Heart right ventricle (tissue), 16 donors: ENCODE measurements at regions of chr1 and their contacts with region 1.

Region 1: DNA sequence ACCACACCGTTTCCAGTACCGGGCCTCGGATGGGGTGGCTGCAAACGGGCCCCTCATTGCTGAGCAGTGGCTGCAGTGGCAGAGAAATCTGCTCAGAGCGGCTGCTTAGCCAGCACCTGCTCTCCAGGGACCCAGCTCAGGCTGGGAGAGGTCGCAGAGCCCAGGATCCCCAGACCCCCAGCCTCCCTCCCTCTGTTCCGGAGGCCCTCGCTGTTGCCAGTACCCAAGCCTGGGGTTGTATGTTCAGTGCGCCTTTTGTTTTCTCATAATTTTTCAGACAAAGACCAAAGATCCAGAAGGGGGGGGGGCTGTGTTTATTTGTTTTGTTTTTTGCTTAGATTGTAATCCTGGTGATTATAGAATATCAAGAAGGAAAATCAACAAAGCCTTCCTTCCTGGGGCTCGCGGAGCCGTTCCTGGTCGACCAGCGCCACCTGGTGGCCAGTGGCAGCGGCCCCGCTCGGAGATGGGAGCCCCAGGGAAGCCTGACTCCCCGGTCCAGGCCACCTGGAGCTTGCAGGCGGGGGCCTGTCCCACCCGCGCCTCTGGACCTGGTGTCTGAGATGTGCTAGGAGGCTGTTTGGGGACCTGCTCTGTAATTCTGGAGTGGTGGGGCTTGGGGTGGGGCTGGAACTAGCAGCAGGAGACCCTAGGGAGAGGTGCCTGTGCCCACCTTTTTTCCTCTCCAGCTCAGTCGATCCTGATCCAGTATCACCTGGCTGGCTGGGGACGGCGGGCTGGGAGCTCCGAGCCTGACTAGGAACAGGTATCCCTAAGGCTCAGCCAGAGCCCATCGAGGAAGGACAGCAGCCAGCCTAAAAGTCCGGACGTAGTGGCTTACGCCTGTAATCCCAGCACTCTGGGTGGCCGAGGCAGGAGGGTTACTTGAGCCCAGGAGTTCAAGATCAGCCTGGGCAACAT is 123.9 kb upstream of the VAMP3 start:
- DNase-seq: peak; percentile 60 to 79
- ATAC-seq: peak in 5 of 8 donors; percentile 32 to 56 (median 41)
- H3K4me3 ChIP-seq: no peak overlapping the region
- H3K27ac ChIP-seq: no peak overlapping the region
- H3K4me1 ChIP-seq: peaks cover 2 to 30% (median 19%) of the 10 kb centered on the region in 9 donors
- H3K27me3 ChIP-seq: peaks cover 0 to 8% (median 0%) of the 10 kb centered on the region in 7 donors
- CTCF ChIP-seq: peak; percentile 89 to 99 (median 93)

Region 2: GRCh38 chr1:7042322-7043190 is 604.7 kb before region 1 on chr1:
- intact Hi-C with region 1: loop called in 9 of 10 experiments (anchors 2 to 10 kb)
- DNase-seq: no peak
- ATAC-seq: peak in 1 of 8 donors; percentile 26
- H3K4me3 ChIP-seq: no peak overlapping the region
- H3K27ac ChIP-seq: no peak overlapping the region
- H3K4me1 ChIP-seq: no peaks in the 10 kb centered on the region
- H3K27me3 ChIP-seq: peaks cover 0 to 28% (median 9%) of the 10 kb centered on the region in 7 donors
- CTCF ChIP-seq: peak in 8 of 9 donors; percentile 10 to 64 (median 54)

Region 3: DNA sequence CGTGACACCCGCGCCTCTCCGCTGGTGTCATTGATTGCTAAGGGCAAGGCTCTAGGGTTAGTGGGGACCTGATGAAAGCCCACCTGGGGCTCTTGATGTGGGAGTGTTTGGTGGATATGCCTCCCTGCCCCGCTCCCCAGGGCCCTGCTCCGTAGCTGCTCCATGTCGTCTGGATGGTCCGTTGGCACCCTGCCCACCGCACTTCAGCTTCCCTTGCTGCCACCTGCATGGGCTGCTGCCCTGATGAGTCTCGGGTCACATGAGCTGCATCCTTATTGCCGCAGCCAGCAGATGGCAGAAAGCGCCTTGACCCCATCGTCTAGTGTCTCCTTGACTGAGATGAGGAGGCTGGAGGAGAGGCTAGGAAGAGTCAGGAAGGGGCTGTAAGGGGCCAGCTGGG is 422.6 kb before region 1 on chr1:
- intact Hi-C with region 1: loop called in 6 of 10 experiments (anchors 5 to 10 kb)
- DNase-seq: peak; percentile 15 to 26
- ATAC-seq: peak in 4 of 8 donors; percentile 21 to 51 (median 38)
- H3K4me3 ChIP-seq: no peak overlapping the region
- H3K27ac ChIP-seq: no peak overlapping the region
- H3K4me1 ChIP-seq: no peaks in the 10 kb centered on the region
- H3K27me3 ChIP-seq: peaks cover 0 to 10% (median 0%) of the 10 kb centered on the region in 7 donors
- CTCF ChIP-seq: peak in 4 of 9 donors; percentile 6 to 41 (median 30)

Region 4: DNA sequence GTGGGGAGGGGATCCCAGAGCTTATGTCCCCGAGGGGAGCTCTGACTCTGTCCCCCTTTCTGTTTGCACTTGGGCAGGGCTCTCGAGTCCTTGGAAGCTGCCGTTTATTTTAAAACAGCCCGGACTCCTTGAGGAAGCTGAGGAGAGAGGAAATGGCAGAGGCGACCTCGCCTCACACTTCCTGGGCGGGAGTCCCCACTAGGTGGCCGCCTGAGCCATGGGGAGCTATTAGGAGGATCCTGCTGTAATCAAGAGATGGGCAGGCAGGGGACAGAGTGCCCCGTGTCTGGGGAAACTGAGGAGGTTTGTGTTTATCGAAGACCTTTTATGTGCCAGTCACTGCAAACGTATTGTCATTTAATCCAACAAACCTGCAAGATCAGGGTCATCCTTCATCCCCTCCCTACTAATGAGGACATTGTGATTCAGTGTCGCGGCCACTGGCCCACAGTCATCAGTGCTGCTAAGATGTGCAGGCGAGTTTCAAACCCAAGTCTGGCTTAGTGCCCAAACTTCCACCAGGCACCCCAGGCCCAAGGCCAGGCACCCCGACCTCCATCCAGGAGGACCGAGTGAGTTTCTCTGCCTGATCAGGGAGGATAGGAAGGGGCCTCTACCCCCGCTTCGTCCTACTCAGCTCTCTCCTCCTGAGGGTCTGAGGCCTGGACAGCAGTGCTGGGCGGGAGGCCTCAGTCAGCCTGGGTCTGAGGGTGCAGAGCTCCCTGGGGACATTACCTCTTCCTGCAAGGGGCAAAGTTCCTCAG is 193.0 kb before region 1 on chr1:
- intact Hi-C with region 1: loop called in 8 of 10 experiments (anchors 1 to 10 kb)
- DNase-seq: peak; percentile 17 to 38
- ATAC-seq: peak in 4 of 8 donors; percentile 27 to 59 (median 40)
- H3K4me3 ChIP-seq: no peak overlapping the region
- H3K27ac ChIP-seq: no peak overlapping the region
- H3K4me1 ChIP-seq: peaks cover 0 to 11% (median 0%) of the 10 kb centered on the region in 9 donors
- H3K27me3 ChIP-seq: no peaks in the 10 kb centered on the region
- CTCF ChIP-seq: peak; percentile 22 to 63 (median 49)

Region 5: DNA sequence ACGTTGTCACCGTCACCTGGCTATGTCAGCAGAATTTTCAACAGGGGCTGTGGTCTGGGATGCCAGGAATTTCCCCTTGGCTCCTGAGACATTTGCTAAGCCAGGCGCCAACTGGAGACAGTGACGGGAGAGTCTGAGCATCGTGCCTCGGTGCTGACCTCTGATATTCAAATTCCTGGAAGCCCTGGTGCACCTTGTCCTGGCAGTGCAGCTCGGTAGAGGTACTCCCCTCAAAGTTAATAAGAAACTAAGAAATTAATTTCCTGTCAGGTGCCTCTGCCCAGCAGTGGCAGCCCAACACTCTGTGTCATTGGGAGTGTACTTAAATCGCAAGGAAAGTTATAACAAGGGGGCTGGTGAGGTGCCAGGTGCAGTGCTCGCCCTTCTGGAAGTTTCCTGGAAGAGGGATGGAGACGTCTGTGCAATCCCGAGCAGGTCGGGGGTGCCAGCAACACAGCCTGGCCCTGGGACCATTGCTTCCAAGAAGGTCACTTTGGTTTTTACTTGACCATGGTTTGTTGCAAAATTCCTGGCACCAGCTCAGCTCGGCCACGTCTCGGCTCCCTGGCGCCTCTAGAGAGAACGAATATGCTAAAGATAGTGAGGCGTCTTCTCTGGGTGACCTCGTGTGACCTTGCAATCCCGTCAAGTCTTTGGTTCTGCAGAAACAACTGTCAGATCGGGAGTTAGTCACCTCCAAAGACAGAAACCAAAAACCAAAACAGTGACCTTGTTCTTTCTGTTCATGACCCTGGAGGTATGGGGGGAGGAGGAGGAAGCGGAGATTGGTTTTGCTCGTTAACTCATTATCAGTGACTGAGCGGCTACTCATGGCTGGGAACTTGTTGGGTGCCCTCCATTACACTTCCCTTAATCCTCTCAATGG is 25.7 kb before region 1 on chr1:
- intact Hi-C with region 1: no loop called
- DNase-seq: no peak
- ATAC-seq: peak in 1 of 8 donors; percentile 55
- H3K4me3 ChIP-seq: no peak overlapping the region
- H3K27ac ChIP-seq: no peak overlapping the region
- H3K4me1 ChIP-seq: peaks cover 0 to 19% (median 12%) of the 10 kb centered on the region in 9 donors
- H3K27me3 ChIP-seq: peaks cover 0 to 10% (median 0%) of the 10 kb centered on the region in 7 donors
- CTCF ChIP-seq: no peak